ENCODE measurements at regions of chr2 and their contacts with region 1.

Region 1: DNA sequence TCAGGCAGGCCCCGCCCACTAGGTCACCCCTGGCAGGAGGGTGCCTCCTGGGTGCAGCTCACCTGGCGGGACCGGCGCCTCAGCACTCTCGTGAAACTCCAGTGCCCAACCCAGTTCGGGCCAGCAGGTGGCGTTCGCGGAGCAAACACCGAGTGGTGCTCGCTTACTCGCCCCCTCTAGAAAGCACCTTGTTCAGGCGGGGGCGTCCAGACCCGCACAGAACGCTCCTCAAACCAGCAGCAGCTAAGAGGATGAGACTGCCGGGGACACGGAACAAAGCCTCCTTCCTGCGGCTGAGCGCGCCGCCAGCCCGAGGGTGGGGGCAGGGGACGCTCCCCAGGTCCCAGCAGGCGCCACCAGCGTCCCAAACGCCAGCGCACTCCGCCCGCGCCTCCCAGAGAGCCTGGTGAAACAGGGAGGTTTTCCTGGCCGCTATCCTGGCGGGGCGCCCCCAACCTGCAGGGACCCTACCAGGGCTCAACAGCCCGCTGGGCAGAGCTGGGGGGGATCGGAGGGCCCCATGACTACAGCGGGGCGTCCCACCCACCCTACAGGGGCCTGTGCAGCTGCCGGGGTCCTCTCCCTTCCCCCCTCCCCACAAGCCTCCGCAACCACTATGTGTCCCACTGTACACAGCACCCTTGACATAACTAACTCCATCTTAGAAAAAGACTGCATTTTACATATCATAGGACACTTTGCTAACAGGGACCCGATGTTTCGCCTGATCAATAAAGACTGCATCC is 44.7 kb downstream of the MRPS5 start:
- DNase-seq: peak; percentile 57
- H3K4me3 ChIP-seq: peak overlapping the region in 1 of 3 experiments; percentile 38
- H3K27ac ChIP-seq: no peak overlapping the region
- H3K4me1 ChIP-seq: no peaks in the 10 kb centered on the region
- H3K27me3 ChIP-seq: peaks cover 9 to 15% of the 10 kb centered on the region in 2 experiments
- CTCF ChIP-seq: peak; percentile 78 to 93
- POLR2A ChIP-seq: no peak

Region 2: DNA sequence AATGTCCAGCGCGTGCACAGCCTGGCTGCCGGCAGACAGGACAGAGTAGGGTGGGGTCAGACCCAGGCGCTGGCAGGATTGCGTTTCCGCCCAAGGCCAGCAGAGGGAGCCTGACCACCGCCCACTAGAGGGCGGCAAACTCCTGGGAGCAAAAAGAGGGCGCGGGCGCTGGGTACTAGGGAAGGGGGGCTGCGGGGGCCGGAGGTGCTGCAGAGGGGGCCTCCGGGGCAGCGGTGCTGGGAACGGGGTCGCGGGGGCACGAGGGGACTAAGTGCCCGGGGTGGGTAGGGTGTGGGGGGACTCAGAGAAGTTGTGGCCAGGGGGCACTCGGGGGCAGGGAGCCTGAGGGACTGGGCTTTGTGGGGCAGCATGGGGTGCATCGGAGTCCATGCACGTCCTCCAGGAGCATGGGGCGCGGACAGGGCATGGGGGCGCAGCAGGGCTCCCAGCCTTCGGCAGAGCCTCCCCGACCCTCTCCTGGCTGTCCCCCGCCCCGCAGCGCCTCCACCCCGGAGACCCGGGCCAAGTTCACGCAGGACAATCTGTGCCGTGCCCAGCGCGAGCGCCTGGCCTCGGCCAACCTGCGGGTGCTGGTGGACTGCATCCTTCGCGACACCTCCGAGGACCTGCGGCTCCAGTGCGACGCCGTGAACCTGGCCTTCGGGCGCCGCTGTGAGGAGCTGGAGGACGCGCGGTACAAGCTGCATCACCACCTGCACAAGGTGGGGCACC is 202.5 kb before region 1 on chr2:
- CTCF ChIA-PET with region 1: no interaction called
- POLR2A ChIA-PET with region 1: no interaction called
- dilution Hi-C with region 1: no loop called
- intact Hi-C with region 1: no loop called
- DNase-seq: peak; percentile 26
- H3K4me3 ChIP-seq: no peak overlapping the region
- H3K27ac ChIP-seq: no peak overlapping the region
- H3K4me1 ChIP-seq: no peaks in the 10 kb centered on the region
- H3K27me3 ChIP-seq: no peaks in the 10 kb centered on the region
- CTCF ChIP-seq: peak; percentile 81 to 99
- POLR2A ChIP-seq: no peak

Region 3: GRCh38 chr2:95022309-95023221 is 54.4 kb before region 1 on chr2:
- CTCF ChIA-PET with region 1: interaction called, 10 read pairs
- POLR2A ChIA-PET with region 1: no interaction called
- dilution Hi-C with region 1: no loop called
- intact Hi-C with region 1: loop called (anchors 1 kb)
- DNase-seq: peak; percentile 56
- H3K4me3 ChIP-seq: no peak overlapping the region
- H3K27ac ChIP-seq: no peak overlapping the region
- H3K4me1 ChIP-seq: no peaks in the 10 kb centered on the region
- H3K27me3 ChIP-seq: peaks cover 38 to 39% of the 10 kb centered on the region in 2 experiments
- CTCF ChIP-seq: peak; percentile 73 to 88
- POLR2A ChIP-seq: no peak

Region 4: DNA sequence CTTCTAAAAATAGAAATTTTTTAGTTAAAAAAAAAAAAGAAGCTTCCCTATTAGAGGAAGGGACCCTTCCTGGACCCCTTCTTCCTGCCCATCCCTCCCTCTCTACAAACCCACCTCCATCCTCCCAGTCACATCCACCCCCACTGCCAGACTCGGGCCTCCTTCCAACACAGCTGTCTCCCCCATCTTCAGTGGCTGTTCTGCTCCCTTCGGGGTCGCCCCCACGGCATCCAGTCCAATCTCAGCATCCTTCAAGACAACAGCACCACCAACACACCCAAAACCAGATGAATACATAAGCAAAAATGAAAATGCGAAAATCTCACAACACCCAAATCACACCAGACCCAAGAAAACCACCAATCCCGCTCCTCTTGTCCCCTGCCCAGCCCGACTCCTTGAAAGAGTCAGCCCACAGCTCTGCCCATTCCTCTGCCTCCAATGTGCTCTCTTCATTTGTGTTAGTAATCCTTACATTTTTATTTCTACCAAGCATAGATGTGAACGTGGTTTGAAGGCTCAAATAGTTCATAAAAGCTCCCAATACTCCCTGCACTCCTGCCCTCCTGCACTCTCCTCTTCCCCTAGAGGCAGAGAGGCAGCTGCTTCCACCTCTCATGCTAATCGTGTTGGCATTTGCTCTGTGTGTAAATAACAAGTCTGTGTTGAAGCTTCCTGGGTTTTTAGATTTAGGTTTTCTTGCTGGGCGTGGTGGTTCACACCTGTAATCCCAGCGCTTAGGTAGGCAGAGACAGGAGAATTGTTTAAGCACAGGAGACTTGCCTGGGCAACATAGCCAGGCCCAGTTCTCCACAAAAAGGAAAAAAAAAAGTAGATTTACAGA is 14.5 kb before region 1 on chr2:
- CTCF ChIA-PET with region 1: interaction called, 19 read pairs
- POLR2A ChIA-PET with region 1: no interaction called
- dilution Hi-C with region 1: no loop called
- intact Hi-C with region 1: no loop called
- DNase-seq: no peak
- H3K4me3 ChIP-seq: no peak overlapping the region
- H3K27ac ChIP-seq: no peak overlapping the region
- H3K4me1 ChIP-seq: no peaks in the 10 kb centered on the region
- H3K27me3 ChIP-seq: no peaks in the 10 kb centered on the region
- CTCF ChIP-seq: no peak
- POLR2A ChIP-seq: no peak

Region 5: DNA sequence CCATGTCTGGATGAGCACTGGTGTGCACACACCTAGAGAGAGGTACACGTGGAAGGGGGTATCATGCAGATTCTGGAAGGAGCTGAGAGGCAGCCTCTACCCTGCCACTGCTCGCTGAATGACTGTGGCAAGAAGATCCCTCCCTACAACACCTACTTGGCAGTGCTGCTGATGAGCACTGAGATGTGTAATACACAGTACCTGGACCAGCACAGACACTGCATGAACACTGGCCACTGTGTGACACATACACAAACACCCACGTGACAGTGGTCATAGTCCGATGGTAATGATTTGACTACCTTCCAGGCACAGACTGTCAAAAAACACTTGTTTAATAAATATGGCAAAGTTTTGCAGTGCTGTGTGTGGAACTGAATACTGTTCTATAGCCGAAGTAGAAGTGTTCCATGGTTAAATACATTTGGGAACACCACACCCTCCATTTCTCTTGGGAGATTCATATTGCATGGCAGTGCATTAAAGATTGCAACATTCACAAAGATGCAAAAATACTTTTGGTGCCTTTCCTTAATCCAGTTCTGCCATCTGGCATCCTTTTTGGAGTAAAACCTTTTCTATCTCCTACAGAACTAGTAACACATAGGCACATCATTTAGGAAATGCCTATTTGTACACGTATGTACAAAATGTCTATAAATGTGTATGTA is 15.1 kb after region 1 on chr2:
- CTCF ChIA-PET with region 1: interaction called, 10 read pairs
- POLR2A ChIA-PET with region 1: no interaction called
- dilution Hi-C with region 1: no loop called
- intact Hi-C with region 1: no loop called
- DNase-seq: no peak
- H3K4me3 ChIP-seq: no peak overlapping the region
- H3K27ac ChIP-seq: no peak overlapping the region
- H3K4me1 ChIP-seq: no peaks in the 10 kb centered on the region
- H3K27me3 ChIP-seq: no peaks in the 10 kb centered on the region
- CTCF ChIP-seq: no peak
- POLR2A ChIP-seq: no peak

Region 6: GRCh38 chr2:95115418-95115817 is 38.5 kb after region 1 on chr2:
- CTCF ChIA-PET with region 1: interaction called, 16 read pairs
- POLR2A ChIA-PET with region 1: no interaction called
- dilution Hi-C with region 1: no loop called
- intact Hi-C with region 1: loop called (anchors 1 kb)
- DNase-seq: peak; percentile 64
- H3K4me3 ChIP-seq: no peak overlapping the region
- H3K27ac ChIP-seq: no peak overlapping the region
- H3K4me1 ChIP-seq: peaks cover 3% of the 10 kb centered on the region
- H3K27me3 ChIP-seq: no peaks in the 10 kb centered on the region
- CTCF ChIP-seq: peak; percentile 79 to 80
- POLR2A ChIP-seq: no peak

Region 7: DNA sequence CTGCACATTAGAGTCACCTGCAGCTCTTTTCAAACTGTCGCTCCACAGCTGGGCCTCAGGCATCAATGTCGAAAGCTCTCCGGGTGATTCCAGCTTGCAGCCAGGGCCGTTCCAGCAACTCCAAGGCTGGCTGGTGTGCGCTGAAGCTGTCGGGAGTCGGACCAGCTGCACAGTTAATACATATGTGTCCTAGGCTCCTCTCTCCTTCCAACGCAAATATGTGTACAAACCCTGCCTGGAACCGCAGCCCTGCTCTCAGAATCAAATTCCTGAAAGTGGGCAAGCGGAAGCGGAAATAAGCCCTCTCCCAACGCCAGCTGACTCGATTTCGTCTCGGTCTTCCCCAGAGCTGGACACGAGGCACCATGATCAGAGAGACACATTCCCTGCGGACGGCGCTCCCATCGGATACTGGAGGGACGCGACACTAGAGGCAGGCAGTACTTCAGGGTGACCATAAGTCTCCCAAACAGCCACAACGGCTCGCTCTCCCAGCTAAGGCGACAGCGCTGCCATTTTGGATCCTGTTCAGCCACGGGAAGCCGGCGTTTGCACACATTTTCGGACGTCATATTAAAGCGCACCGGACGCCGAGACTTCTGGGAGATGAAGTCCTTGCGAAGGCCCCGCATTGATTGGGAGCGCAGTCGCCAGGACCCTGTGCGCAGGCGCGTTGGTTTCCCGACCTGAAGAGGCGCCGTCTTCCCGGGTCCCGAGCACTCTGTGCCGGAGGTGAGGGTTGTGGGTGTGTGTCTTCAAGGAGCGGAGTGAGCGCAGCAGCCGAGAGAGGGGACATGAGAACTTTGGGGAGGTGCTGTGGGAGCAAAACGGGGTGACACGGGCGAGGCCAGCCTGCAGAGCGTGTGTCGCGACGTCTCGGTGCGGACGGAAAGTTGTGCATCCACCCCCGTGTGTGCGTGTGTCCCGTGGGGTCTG is 88.4 kb after region 1 on chr2 and contains the start of gene ZNF2:
- CTCF ChIA-PET with region 1: interaction called, 3 read pairs
- POLR2A ChIA-PET with region 1: no interaction called
- dilution Hi-C with region 1: no loop called
- intact Hi-C with region 1: loop called (anchors 5 kb)
- DNase-seq: peak; percentile 97
- H3K4me3 ChIP-seq: peak within 1 kb of the TSS; percentile 58 to 86 (median 67)
- H3K27ac ChIP-seq: peak within 1 kb of the TSS; percentile 84
- H3K4me1 ChIP-seq: peaks cover 8% of the 10 kb centered on the region
- H3K27me3 ChIP-seq: no peaks in the 10 kb centered on the region
- CTCF ChIP-seq: peak in 1 of 2 donors; percentile 7
- POLR2A ChIP-seq: peak; percentile 87
- total RNA-seq, gene ZNF2: 4.2 and 4.4 TPM in 2 replicates

Measured in endothelial cell of umbilical vein (primary cell).